H1 (cell line): ENCODE measurements at regions of chr3 and their contacts with region 1.

Region 1: DNA sequence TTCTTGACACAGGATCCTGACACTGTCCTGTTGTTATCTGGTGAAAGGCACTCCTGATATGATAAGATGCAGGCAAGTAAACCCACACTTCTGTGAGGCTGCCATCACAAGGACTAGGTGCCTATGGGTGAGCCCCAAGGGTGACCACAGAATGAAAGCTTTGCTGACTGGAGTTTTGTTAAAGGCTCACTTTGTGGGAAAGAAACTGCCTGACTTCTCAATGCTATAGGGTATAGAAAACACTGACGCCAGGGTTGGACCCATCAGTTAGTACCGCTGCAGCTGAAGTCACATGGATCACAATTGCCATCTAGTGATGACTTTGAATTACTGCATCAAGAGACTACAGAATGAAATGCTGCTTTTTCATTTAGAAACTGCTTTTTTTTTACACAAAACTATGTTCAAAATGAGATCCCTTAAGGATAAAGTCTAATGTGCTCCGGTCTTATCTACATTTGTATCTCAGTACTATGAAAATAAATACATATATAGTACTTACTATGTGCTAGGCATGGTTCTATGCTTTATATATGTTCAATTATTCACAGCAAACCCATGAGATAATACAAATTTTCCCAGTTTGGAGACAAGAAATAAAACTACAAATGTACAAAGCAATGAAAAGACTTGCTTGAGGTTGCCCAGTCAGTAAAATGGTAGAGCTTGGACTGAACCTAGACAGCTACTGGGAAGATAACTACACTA is 64.2 kb upstream of the CMSS1 start:
- DNase-seq: peak in 1 of 2 experiments; percentile 52
- H3K4me3 ChIP-seq: no peak overlapping the region
- H3K27ac ChIP-seq: no peak overlapping the region
- H3K4me1 ChIP-seq: no peaks in the 10 kb centered on the region; a peak in 1 of 7 replicates
- H3K27me3 ChIP-seq: no peaks in the 10 kb centered on the region
- CTCF ChIP-seq: peak; percentile 9 to 79 (median 76)
- EP300 ChIP-seq: no peak
- POLR2A ChIP-seq: no peak
- RAD21 ChIP-seq: peak; percentile 93 to 96

Region 2: GRCh38 chr3:99114565-99115291 is 638.7 kb before region 1 on chr3:
- CTCF ChIA-PET with region 1: interaction called, 30 read pairs
- POLR2A ChIA-PET with region 1: no interaction called
- DNase-seq: peak; percentile 41 to 52
- H3K4me3 ChIP-seq: no peak overlapping the region
- H3K27ac ChIP-seq: no peak overlapping the region
- H3K4me1 ChIP-seq: no peaks in the 10 kb centered on the region
- H3K27me3 ChIP-seq: no peaks in the 10 kb centered on the region
- CTCF ChIP-seq: peak; percentile 79 to 96 (median 91)
- EP300 ChIP-seq: no peak
- POLR2A ChIP-seq: no peak
- RAD21 ChIP-seq: peak; percentile 99

Region 3: GRCh38 chr3:99499235-99500158 is 253.9 kb before region 1 on chr3:
- CTCF ChIA-PET with region 1: interaction called, 27 read pairs
- POLR2A ChIA-PET with region 1: no interaction called
- DNase-seq: no peak
- H3K4me3 ChIP-seq: no peak overlapping the region
- H3K27ac ChIP-seq: no peak overlapping the region
- H3K4me1 ChIP-seq: no peaks in the 10 kb centered on the region
- H3K27me3 ChIP-seq: no peaks in the 10 kb centered on the region
- CTCF ChIP-seq: peak; percentile 33 to 80 (median 60)
- EP300 ChIP-seq: no peak
- POLR2A ChIP-seq: no peak
- RAD21 ChIP-seq: peak; percentile 58 to 68

Region 4: DNA sequence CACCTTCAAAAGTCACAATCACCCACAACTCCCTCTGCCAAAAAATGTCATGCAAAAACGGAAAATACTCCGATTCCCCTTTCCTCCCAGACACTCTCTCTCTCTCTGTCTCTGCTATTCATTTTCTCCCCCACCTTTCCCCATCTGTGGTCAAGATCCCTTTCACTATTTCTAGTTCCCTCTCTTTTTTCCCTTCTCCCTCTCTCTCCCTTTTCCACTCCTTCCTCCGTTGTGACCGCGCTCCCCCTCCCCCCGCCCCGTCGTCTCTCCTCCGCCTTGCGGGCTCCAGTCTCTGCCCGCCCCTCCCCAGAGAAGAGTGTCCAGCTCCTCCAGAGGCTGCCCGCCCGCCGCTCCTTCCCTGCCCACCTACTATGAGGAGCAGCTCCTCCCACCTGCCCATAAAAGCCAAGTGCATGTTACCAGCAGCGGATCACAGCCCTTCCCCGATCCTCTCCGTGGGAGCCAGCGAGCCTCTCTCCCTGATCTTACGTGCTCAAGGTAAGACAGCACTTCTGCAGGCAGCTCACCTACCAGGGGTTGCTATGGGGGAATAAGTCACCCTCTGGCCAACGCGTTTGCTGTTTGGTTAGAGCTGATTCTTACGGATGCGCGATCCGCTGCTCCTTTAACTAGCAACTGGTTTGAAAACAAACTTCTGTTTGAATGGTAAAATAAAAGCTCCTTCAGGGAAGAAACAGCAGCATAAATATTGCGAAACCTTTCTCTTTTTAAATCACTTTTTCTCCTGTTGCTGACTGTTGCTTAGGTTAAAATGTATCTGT is 115.1 kb before region 1 on chr3 and contains the start of gene COL8A1:
- CTCF ChIA-PET with region 1: interaction called, 19 read pairs
- POLR2A ChIA-PET with region 1: no interaction called
- DNase-seq: peak in 1 of 2 experiments; percentile 75
- H3K4me3 ChIP-seq: peak within 1 kb of the TSS; percentile 47 to 76 (median 74)
- H3K27ac ChIP-seq: no peak within 1 kb of the TSS
- H3K4me1 ChIP-seq: peaks cover 2 to 13% (median 10%) of the 10 kb centered on the region in 4 experiments; a peak in 4 of 7 replicates
- H3K27me3 ChIP-seq: peaks cover 0 to 28% (median 20%) of the 10 kb centered on the region in 4 experiments; a peak in 6 of 7 replicates
- CTCF ChIP-seq: no peak
- EP300 ChIP-seq: no peak
- POLR2A ChIP-seq: no peak
- RAD21 ChIP-seq: no peak
- total RNA-seq, gene COL8A1: 0.99 and 1.2 TPM in 2 replicates

Region 5: GRCh38 chr3:99765042-99765942 is 11.9 kb after region 1 on chr3:
- CTCF ChIA-PET with region 1: interaction called, 12 read pairs
- POLR2A ChIA-PET with region 1: no interaction called
- DNase-seq: no peak
- H3K4me3 ChIP-seq: no peak overlapping the region
- H3K27ac ChIP-seq: no peak overlapping the region
- H3K4me1 ChIP-seq: no peaks in the 10 kb centered on the region
- H3K27me3 ChIP-seq: no peaks in the 10 kb centered on the region
- CTCF ChIP-seq: no peak
- EP300 ChIP-seq: no peak
- POLR2A ChIP-seq: no peak
- RAD21 ChIP-seq: no peak

Region 6: GRCh38 chr3:99789011-99789721 is 35.7 kb after region 1 on chr3:
- CTCF ChIA-PET with region 1: interaction called, 16 read pairs
- POLR2A ChIA-PET with region 1: no interaction called
- DNase-seq: no peak
- H3K4me3 ChIP-seq: no peak overlapping the region
- H3K27ac ChIP-seq: no peak overlapping the region
- H3K4me1 ChIP-seq: no peaks in the 10 kb centered on the region
- H3K27me3 ChIP-seq: no peaks in the 10 kb centered on the region
- CTCF ChIP-seq: peak in 2 of 3 experiments; percentile 49 to 65; a peak in 3 of 4 replicates
- EP300 ChIP-seq: no peak
- POLR2A ChIP-seq: no peak
- RAD21 ChIP-seq: peak; percentile 71 to 77